ENCODE measurements at regions of chr1 and their contacts with region 1.

Region 1: DNA sequence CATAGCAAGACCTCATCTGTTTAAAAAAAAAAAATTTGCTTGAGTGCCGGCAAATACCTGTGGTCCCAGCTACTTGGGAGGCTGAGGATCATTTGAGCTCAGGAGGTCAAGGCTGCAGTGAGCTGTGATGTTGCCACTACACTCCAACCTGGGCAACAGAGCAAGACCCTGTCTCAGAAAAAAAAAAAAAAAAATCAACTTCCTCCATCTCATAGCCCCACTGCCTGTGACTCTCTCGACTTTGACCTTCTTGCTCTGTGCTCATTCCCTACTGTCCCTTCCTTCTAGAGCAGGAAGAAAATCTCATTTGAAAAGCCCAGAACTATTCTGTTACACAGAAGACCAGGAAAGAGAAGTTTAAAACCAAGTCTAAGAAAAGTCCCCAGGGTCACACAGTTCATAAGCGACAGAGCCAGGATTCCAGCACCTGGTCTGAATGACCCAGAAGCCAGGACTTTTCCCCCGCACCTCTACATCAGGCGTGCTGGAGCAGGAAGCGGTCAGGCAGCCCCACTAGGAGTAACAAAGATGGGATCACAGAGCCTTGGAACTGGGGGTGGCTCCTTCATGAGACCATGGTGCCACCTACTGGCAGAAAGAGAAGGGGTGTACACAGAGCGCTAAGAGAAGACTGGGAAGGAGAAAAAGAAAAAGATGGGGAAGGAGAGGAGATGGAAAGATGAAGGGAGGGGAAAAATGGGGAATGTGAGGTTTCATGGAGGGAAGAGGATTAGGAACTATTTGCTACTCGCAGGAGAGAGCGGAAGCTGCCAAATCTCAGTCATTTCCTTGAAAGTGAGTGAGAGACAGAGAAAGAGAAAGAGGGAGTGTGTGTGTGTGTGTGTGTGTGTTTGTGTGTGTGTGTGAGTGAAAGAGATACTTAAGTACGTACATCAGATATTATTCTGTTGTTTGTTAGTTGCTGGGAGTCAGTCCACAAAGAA is 3.1 kb upstream of the P3R3URF start:
- DNase-seq: peak; percentile 80
- ATAC-seq: peak; percentile 69
- H3K4me3 ChIP-seq: peak overlapping the region; percentile 5; a peak in 1 of 4 replicates
- H3K27ac ChIP-seq: no peak overlapping the region; the same call in 1 of the 2 replicates
- H3K4me1 ChIP-seq: peaks cover 55 to 63% of the 10 kb centered on the region in 2 experiments
- H3K27me3 ChIP-seq: no peaks in the 10 kb centered on the region
- CTCF ChIP-seq: peak in 2 of 3 experiments; percentile 96 to 98; a peak in 4 of 6 replicates
- POLR2A ChIP-seq: no peak
- RAD21 ChIP-seq: no peak

Region 2: DNA sequence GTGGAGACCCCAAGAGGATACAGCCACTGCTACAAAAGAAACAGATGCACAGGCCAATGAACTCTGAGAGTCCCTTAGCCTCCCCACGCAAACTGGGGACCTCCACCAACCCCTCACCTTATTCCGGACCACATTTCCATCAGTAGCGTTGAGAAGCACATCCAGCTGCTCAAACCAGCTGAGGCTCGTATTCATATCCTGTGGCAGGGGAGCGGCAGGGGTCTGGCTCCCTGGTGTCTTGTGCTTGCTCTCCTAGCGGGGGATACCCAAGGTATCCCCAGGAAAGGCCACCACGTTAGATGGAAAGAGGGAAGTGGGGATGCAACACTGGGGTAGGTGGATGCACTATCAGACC is 680.0 kb before region 1 on chr1:
- CTCF ChIA-PET with region 1: interaction called, 3 read pairs
- POLR2A ChIA-PET with region 1: no interaction called
- RAD21 ChIA-PET with region 1: no interaction called
- intact Hi-C with region 1: loop called (anchors 5 kb)
- DNase-seq: no peak
- ATAC-seq: no peak; the same call in 1 of the 2 replicates
- H3K4me3 ChIP-seq: peak overlapping the region; percentile 68 to 92
- H3K27ac ChIP-seq: peak overlapping the region; percentile 36
- H3K4me1 ChIP-seq: peaks cover 2 to 18% of the 10 kb centered on the region in 2 experiments; a peak in 3 of 4 replicates
- H3K27me3 ChIP-seq: no peaks in the 10 kb centered on the region
- CTCF ChIP-seq: no peak
- POLR2A ChIP-seq: peak; percentile 3
- RAD21 ChIP-seq: no peak

Region 3: GRCh38 chr1:45686317-45687013 is 492.9 kb before region 1 on chr1 and contains the start of gene GPBP1L1:
- CTCF ChIA-PET with region 1: no interaction called
- POLR2A ChIA-PET with region 1: interaction called, 4 read pairs
- RAD21 ChIA-PET with region 1: no interaction called
- intact Hi-C with region 1: loop called (anchors 1 kb)
- DNase-seq: peak; percentile 91
- ATAC-seq: peak; percentile 76
- H3K4me3 ChIP-seq: peak within 1 kb of the TSS; percentile 56 to 77
- H3K27ac ChIP-seq: peak within 1 kb of the TSS; percentile 94
- H3K4me1 ChIP-seq: peaks cover 3 to 23% of the 10 kb centered on the region in 2 experiments; a peak in 3 of 4 replicates
- H3K27me3 ChIP-seq: no peaks in the 10 kb centered on the region
- CTCF ChIP-seq: no peak
- POLR2A ChIP-seq: peak; percentile 60
- RAD21 ChIP-seq: no peak
- total RNA-seq, gene GPBP1L1: 110 TPM

Region 4: DNA sequence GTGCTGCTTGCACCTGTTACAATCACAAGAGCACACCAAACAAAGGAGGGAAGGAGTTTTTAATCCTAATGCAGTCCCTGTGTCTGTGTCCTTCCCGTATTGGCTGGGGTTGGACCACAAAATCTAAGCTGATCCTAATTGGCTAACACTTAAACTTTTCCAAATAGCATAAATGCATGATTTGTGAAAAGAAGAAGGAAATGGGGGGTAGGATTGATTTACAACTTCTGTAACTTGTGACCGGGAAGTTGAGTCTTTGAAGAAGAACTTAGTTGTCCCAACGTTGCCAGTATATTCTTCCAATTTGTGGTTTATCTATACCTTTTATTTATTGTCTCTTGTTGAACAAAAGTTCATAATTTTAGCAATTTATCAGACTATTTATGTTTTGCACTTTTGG is 417.1 kb before region 1 on chr1:
- CTCF ChIA-PET with region 1: no interaction called
- POLR2A ChIA-PET with region 1: no interaction called
- RAD21 ChIA-PET with region 1: no interaction called
- intact Hi-C with region 1: no loop called
- DNase-seq: no peak
- ATAC-seq: no peak
- H3K4me3 ChIP-seq: no peak overlapping the region
- H3K27ac ChIP-seq: no peak overlapping the region
- H3K4me1 ChIP-seq: peaks cover 0 to 4% of the 10 kb centered on the region in 2 experiments; a peak in 2 of 4 replicates
- H3K27me3 ChIP-seq: no peaks in the 10 kb centered on the region
- CTCF ChIP-seq: no peak
- POLR2A ChIP-seq: no peak
- RAD21 ChIP-seq: no peak

Region 5: GRCh38 chr1:45772971-45773370 is 406.4 kb before region 1 on chr1:
- CTCF ChIA-PET with region 1: no interaction called
- POLR2A ChIA-PET with region 1: no interaction called
- RAD21 ChIA-PET with region 1: no interaction called
- intact Hi-C with region 1: no loop called
- DNase-seq: no peak
- ATAC-seq: no peak
- H3K4me3 ChIP-seq: no peak overlapping the region
- H3K27ac ChIP-seq: no peak overlapping the region
- H3K4me1 ChIP-seq: no peaks in the 10 kb centered on the region; a peak in 1 of 4 replicates
- H3K27me3 ChIP-seq: no peaks in the 10 kb centered on the region
- CTCF ChIP-seq: no peak
- POLR2A ChIP-seq: no peak
- RAD21 ChIP-seq: no peak

Region 6: GRCh38 chr1:46036894-46037839 is 142.2 kb before region 1 on chr1:
- CTCF ChIA-PET with region 1: interaction called, 3 read pairs
- POLR2A ChIA-PET with region 1: interaction called, 11 read pairs
- RAD21 ChIA-PET with region 1: interaction called in 1 of 2 experiments, 4 read pairs
- intact Hi-C with region 1: loop called (anchors 1 kb)
- DNase-seq: peak; percentile 63
- ATAC-seq: peak; percentile 85
- H3K4me3 ChIP-seq: no peak overlapping the region
- H3K27ac ChIP-seq: no peak overlapping the region
- H3K4me1 ChIP-seq: peaks cover 7 to 11% of the 10 kb centered on the region in 2 experiments; a peak in 3 of 4 replicates
- H3K27me3 ChIP-seq: no peaks in the 10 kb centered on the region
- CTCF ChIP-seq: peak; percentile 96 to 98 (median 96)
- POLR2A ChIP-seq: no peak
- RAD21 ChIP-seq: peak; percentile 100

Region 7: DNA sequence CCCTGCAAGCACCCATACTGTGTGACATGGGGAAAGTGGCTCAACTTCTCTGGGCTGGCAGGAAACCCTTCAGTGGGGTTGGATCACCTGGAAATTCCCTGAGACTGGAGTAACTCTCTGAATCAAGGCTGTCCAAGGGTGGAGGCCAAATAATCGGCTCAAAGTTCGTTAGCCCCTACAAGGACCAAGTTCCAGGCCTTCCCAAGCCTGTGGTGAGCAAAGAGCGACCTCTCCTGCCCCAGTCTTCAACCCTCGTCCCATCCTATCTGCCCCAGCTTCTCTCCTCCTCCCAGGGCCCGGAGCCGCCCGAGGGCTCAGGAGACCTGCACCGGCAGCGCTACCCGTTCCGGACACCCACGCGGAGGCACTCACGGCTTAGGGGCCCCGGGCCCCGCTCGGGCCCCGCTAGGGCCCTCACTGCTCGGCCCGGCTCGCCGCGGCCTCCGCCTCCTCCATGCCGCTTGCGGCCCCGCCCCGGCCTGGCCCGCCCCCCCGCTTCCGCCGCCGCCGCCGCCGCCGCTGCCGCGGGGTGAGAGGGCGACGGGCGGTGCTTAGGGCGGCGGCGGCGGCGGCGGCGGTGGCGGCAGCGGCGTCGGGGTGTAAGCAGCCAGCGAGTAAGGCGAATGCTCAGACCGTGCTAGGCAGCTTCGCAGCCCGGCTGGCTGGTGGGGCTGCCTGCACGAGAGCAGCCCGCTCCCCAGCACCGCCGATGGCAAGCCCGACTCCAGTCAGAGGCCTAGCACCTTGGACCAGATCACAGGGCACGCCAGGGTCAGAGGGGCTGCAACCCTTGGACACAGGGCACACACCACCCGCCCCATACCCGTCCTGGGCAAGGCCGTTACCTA is 18.8 kb after region 1 on chr1 and contains the start of gene POMGNT1:
- CTCF ChIA-PET with region 1: interaction called, 9 read pairs
- POLR2A ChIA-PET with region 1: interaction called, 5 read pairs
- RAD21 ChIA-PET with region 1: interaction called in 1 of 2 experiments, 5 read pairs
- intact Hi-C with region 1: loop called (anchors 1 kb)
- DNase-seq: no peak
- ATAC-seq: peak; percentile 93
- H3K4me3 ChIP-seq: peak within 1 kb of the TSS; percentile 66 to 79
- H3K27ac ChIP-seq: peak within 1 kb of the TSS; percentile 78
- H3K4me1 ChIP-seq: peaks cover 11 to 16% of the 10 kb centered on the region in 2 experiments; a peak in 3 of 4 replicates
- H3K27me3 ChIP-seq: no peaks in the 10 kb centered on the region
- CTCF ChIP-seq: peak; percentile 3 to 36 (median 23); a peak in 2 of 6 replicates
- POLR2A ChIP-seq: peak; percentile 40
- RAD21 ChIP-seq: peak; percentile 68
- total RNA-seq, gene POMGNT1: 97.7 TPM

Measured in HCT116 (cell line).